Transverse colon (tissue), 4 donors: ENCODE measurements at regions of chr2 and their contacts with region 1.

Region 1: DNA sequence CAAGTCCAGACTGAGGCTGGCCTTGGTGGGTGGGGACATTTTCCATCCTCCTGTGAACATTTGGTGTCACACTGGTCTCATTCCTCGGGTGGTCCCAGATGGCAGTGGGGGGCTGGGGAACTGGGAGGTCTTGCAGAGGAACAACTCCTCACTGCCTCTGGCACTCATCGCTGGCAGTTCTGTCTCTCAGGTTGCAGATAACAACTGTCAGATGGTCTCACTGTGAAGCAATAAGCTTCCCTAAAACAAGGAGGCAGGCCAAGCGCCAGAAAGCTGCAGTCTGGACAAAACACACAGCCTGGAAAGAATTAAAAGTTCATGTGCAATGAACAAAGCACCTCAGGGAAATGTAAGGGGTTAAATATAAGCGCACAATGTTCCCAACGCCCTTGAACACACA is 78.1 kb downstream of the IRS1 start:
- DNase-seq: no peak
- H3K4me3 ChIP-seq: no peak overlapping the region
- H3K27ac ChIP-seq: no peak overlapping the region
- H3K4me1 ChIP-seq: peaks cover 0 to 16% (median 3%) of the 10 kb centered on the region in 4 donors
- H3K27me3 ChIP-seq: no peaks in the 10 kb centered on the region
- CTCF ChIP-seq: no peak
- EP300 ChIP-seq: no peak
- POLR2A ChIP-seq: no peak

Region 2: GRCh38 chr2:226835796-226836547 is 114.4 kb after region 1 on chr2 and contains the start of gene RHBDD1:
- in situ Hi-C with region 1: no loop called
- intact Hi-C with region 1: loop called (anchors 5 kb)
- DNase-seq: peak; percentile 96
- H3K4me3 ChIP-seq: peak within 1 kb of the TSS; percentile 70 to 94 (median 82)
- H3K27ac ChIP-seq: peak within 1 kb of the TSS; percentile 99 to 100 (median 100)
- H3K4me1 ChIP-seq: peaks cover 16 to 39% (median 21%) of the 10 kb centered on the region in 4 donors
- H3K27me3 ChIP-seq: no peaks in the 10 kb centered on the region
- CTCF ChIP-seq: no peak
- EP300 ChIP-seq: peak; percentile 51
- POLR2A ChIP-seq: peak; percentile 95
- total RNA-seq, gene RHBDD1: 11.9 to 47.5 (median 22.5) TPM